Activated CD4-positive, alpha-beta T cell treated with anti-CD3 and anti-CD28 coated beads, Interleukin-2, amount 10 ng/mL, durations not matched to agents 7 days and 5 days (primary cell): ENCODE measurements at regions of chr16 and their contacts with region 1.

Region 1: GRCh38 chr16:30615358-30616091 is 5.3 kb upstream of the ZNF689 start:
- DNase-seq: peak; percentile 81
- H3K4me3 Mint-ChIP-seq: no peak overlapping the region
- H3K27ac Mint-ChIP-seq: no peak overlapping the region
- H3K4me1 Mint-ChIP-seq: peaks cover 16% of the 10 kb centered on the region
- H3K27me3 Mint-ChIP-seq: peaks cover 3% of the 10 kb centered on the region

Region 2: DNA sequence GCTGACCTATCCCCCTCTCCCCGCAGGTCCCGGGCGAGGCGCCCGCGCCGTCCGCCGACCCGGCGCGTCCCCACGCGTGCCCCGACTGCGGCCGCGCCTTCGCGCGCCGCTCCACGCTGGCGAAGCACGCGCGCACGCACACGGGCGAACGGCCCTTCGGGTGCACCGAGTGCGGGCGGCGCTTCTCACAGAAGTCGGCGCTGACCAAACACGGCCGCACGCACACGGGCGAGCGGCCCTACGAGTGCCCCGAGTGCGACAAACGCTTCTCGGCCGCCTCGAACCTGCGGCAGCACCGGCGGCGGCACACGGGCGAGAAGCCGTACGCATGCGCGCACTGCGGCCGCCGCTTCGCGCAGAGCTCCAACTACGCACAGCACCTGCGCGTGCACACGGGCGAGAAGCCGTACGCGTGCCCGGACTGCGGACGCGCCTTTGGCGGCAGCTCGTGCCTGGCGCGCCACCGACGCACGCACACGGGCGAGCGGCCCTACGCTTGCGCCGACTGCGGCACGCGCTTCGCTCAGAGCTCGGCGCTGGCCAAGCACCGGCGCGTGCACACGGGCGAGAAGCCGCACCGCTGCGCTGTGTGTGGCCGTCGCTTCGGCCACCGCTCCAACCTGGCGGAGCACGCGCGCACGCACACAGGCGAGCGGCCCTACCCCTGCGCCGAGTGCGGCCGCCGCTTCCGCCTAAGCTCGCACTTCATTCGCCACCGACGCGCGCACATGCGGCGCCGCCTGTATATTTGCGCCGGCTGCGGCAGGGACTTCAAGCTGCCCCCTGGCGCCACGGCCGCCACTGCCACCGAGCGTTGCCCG is 197.8 kb before region 1 on chr16:
- CTCF ChIA-PET with region 1: interaction called, 10 read pairs
- POLR2A ChIA-PET with region 1: interaction called, 3 read pairs
- DNase-seq: peak; percentile 90
- H3K4me3 Mint-ChIP-seq: peak overlapping the region; percentile 59
- H3K27ac Mint-ChIP-seq: peak overlapping the region; percentile 31
- H3K4me1 Mint-ChIP-seq: peaks cover 35% of the 10 kb centered on the region
- H3K27me3 Mint-ChIP-seq: no peaks in the 10 kb centered on the region

Region 3: DNA sequence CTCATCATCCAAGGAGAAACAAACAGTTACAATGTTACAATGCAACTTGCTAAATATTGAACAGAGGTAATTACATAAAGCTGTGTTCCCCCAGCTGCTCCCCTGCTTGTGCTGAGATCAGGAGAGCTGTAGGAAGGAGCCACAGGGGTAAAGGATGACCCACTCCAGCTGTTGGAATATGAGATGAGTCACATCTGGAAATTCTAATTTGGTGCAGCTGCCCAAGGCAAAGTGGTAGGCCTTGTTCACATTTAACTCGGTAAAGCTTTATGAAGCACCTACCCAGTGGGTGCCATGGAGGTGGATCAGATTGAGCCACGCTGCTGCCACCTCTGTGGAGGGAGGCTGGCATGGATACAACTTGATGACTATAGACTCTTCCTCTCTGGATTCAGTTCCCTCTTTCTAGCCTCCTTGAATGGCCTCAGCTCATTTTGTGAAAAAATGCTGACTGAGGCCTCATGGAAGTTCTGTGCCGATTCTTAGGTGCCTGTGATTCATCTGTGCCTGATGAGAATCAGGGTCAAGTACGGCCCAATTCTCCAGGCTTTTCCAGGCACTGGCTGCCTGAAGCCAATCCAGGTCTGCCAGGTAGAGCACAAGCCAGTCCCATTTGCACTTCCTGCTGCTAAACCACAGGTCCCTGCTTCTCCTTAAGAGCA is 12.8 kb before region 1 on chr16:
- CTCF ChIA-PET with region 1: interaction called, 27 read pairs
- POLR2A ChIA-PET with region 1: no interaction called
- DNase-seq: no peak
- H3K4me3 Mint-ChIP-seq: no peak overlapping the region
- H3K27ac Mint-ChIP-seq: no peak overlapping the region
- H3K4me1 Mint-ChIP-seq: peaks cover 15% of the 10 kb centered on the region
- H3K27me3 Mint-ChIP-seq: no peaks in the 10 kb centered on the region

Region 4: DNA sequence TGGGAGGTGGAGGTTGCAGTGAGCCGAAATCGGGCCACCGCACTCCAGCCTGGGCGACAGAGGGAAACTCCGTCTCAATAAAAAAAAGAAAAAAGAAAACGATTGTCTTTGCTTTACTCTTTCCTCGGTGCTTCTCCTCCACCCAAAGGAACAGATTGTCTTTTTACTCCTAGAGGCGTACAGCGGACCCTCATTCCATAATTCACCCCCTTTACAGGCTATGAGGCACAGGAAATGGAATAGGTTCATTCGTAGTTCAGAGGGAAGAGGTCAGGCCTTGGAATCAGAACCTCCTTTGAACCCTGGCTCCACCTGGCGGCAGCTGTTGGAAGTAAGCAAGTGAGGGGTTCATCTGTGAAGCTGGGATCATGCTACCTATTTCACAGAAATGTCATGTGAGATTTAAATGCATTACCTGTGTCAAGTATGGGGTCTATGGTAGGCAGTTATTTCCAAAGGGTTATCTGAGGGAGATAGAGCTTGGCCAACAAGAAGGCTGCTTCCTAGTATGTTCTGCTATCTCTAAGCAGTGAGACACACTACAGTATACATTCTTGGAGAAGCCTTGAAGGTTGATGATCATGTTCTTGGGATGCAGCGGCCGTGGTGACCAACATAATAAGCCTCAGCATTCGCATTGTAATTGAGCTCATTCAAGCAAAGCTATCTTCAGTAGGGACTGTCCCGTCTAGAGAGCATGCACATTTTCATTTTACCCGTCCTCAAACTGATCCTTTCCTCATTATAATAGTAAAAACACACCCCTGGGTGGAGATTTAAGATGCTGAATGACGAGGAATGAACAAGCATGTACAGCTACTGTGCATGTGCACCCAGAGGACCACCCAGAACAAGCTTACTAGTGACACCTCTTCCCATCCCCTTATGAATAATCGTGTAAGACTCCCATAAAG is 13.4 kb after region 1 on chr16:
- CTCF ChIA-PET with region 1: interaction called, 28 read pairs
- POLR2A ChIA-PET with region 1: no interaction called
- DNase-seq: peak; percentile 91
- H3K4me3 Mint-ChIP-seq: no peak overlapping the region
- H3K27ac Mint-ChIP-seq: no peak overlapping the region
- H3K4me1 Mint-ChIP-seq: peaks cover 11% of the 10 kb centered on the region
- H3K27me3 Mint-ChIP-seq: no peaks in the 10 kb centered on the region

Region 5: GRCh38 chr16:30637942-30638341 is 22.4 kb after region 1 on chr16:
- CTCF ChIA-PET with region 1: interaction called, 17 read pairs
- POLR2A ChIA-PET with region 1: no interaction called
- DNase-seq: peak; percentile 48
- H3K4me3 Mint-ChIP-seq: no peak overlapping the region
- H3K27ac Mint-ChIP-seq: no peak overlapping the region
- H3K4me1 Mint-ChIP-seq: peaks cover 16% of the 10 kb centered on the region
- H3K27me3 Mint-ChIP-seq: peaks cover 2% of the 10 kb centered on the region